ENCODE measurements at regions of chrX and their contacts with region 1.

Region 1: GRCh38 chrX:46376246-46376885 is 168.9 kb downstream of the ZNF674 start:
- DNase-seq: peak; percentile 59 to 85
- ATAC-seq: peak; percentile 95 to 96
- H3K4me3 ChIP-seq: no peak overlapping the region
- H3K27ac ChIP-seq: peak overlapping the region; percentile 75 to 95
- H3K4me1 ChIP-seq: peaks cover 36% of the 10 kb centered on the region
- CTCF ChIP-seq: peak; percentile 73
- EP300 ChIP-seq: no peak
- POLR2A ChIP-seq: no peak
- RAD21 ChIP-seq: peak; percentile 90 to 95

Region 2: DNA sequence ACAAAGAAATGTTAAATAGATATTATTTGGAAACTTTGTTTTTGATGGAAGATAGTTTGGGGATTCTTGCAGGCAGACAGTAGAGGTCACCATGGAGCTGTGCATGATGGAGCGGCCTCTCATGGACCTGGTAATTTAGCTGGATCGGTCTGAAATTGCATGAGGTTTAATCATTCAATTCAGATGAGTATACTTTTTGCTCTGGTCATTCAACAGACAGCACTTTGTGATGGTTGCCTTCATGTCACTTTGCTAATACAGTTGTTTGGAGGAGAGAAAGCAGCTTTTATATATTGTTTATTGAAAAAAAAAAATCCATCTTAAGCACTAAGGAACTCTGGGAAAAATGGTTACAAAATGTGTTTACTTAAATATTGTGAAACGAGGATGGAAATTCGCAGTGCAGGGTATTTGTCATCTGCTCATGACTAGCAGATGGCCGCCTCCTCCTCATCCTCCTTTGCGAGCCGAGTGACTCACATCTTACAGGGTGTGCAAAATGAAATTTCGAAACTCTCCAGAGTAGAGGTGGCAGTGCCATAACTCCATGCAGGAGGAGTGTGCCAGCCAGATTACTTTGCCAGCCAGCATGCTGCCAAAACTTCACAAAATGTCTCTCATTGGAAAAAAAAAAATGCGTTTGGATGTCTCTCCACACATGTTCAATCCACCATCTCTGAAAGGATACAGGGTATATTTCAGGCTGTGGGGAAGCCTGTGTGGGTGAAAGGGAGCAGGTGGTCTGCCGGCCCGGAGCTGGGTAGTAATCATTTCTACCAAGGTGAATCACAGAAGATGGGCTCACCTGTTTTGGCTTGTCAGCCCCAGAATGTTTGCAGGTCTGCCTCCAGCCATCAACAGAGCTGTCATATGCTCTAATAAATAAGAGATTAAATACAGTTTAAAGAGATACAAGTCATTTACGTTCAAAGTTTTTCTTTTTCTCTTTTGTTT is 860.8 kb before region 1 on chrX:
- CTCF ChIA-PET with region 1: interaction called, 19 read pairs
- POLR2A ChIA-PET with region 1: no interaction called
- DNase-seq: peak; percentile 56 to 95
- ATAC-seq: peak; percentile 95 to 99
- H3K4me3 ChIP-seq: peak overlapping the region; percentile 18; the same call in 1 of the 3 replicates
- H3K27ac ChIP-seq: peak overlapping the region; percentile 79 to 96
- H3K4me1 ChIP-seq: peaks cover 40% of the 10 kb centered on the region
- CTCF ChIP-seq: peak; percentile 79
- EP300 ChIP-seq: peak; percentile 91; a peak in 3 of 5 replicates
- POLR2A ChIP-seq: no peak
- RAD21 ChIP-seq: peak; percentile 90 to 91

Region 3: GRCh38 chrX:45824471-45824870 is 551.9 kb before region 1 on chrX:
- CTCF ChIA-PET with region 1: interaction called, 37 read pairs
- POLR2A ChIA-PET with region 1: interaction called, 6 read pairs
- DNase-seq: peak; percentile 73 to 91
- ATAC-seq: peak; percentile 98 to 99
- H3K4me3 ChIP-seq: no peak overlapping the region
- H3K27ac ChIP-seq: peak overlapping the region; percentile 64 to 66
- H3K4me1 ChIP-seq: peaks cover 62% of the 10 kb centered on the region
- CTCF ChIP-seq: peak; percentile 75
- EP300 ChIP-seq: no peak
- POLR2A ChIP-seq: no peak
- RAD21 ChIP-seq: peak; percentile 82 to 85

Region 4: DNA sequence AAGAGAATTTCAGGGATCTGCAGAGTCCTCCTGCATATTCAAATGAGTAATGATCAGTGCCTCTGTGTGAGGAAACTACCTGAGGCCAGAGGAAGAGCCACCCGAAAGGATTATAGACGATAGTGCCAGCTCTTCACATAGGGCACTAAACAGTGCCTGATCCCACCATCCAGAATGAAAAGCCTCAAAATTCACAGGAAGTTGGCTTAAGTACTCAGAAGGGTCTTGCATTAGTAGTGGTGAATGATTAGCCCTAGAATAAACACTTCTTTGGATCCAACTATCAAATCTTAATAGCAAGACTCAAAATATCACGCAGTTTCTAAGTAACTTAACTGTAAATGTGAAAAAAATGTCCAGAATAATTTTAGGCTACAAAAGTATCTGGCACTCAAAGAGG is 155.5 kb before region 1 on chrX:
- CTCF ChIA-PET with region 1: no interaction called
- POLR2A ChIA-PET with region 1: no interaction called
- DNase-seq: peak in 1 of 2 experiments; percentile 6
- ATAC-seq: peak in 1 of 2 experiments; percentile 27; a peak in 1 of 6 replicates
- H3K4me3 ChIP-seq: 0 out of 3 replicates have a peak overlapping the region, but pooled peaks have one; percentile 0
- H3K27ac ChIP-seq: peak overlapping the region; percentile 71 to 75
- H3K4me1 ChIP-seq: peaks cover 16% of the 10 kb centered on the region
- CTCF ChIP-seq: no peak
- EP300 ChIP-seq: no peak
- POLR2A ChIP-seq: no peak
- RAD21 ChIP-seq: no peak

Region 5: DNA sequence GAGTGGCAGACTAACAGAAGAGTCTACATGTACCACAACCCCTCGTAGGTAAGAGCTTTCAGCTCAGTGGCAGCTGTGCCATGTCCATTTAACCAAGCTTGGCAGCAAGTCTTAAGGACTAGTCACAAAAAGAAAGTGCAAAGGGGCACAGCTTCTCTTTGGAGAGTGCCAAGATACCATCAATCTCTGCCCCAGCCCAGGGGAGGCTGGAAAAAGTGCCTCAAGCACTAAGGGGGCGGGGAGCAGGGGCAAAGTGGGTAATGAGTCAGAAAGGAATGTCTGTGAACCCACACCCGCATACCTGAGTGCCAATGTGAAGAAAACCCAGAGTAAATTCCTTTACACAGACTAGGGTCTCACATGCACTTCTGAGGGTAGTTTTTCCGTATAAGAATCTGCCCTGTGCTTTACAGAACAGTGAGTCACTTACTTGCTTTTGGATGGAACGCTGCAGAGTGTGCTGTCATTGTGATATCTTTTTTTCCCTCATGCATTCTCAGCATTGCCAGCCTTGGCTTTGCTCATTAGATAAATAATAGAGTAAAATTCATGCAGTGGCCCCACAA is 51.0 kb before region 1 on chrX:
- CTCF ChIA-PET with region 1: interaction called, 18 read pairs
- POLR2A ChIA-PET with region 1: interaction called, 27 read pairs
- DNase-seq: peak; percentile 80 to 96
- ATAC-seq: peak; percentile 78 to 88
- H3K4me3 ChIP-seq: peak overlapping the region; percentile 54; the same call in 2 of the 3 replicates
- H3K27ac ChIP-seq: peak overlapping the region; percentile 93 to 99
- H3K4me1 ChIP-seq: peaks cover 70% of the 10 kb centered on the region
- CTCF ChIP-seq: no peak
- EP300 ChIP-seq: peak; percentile 92 to 97
- POLR2A ChIP-seq: no peak
- RAD21 ChIP-seq: peak; percentile 42 to 68

Region 6: DNA sequence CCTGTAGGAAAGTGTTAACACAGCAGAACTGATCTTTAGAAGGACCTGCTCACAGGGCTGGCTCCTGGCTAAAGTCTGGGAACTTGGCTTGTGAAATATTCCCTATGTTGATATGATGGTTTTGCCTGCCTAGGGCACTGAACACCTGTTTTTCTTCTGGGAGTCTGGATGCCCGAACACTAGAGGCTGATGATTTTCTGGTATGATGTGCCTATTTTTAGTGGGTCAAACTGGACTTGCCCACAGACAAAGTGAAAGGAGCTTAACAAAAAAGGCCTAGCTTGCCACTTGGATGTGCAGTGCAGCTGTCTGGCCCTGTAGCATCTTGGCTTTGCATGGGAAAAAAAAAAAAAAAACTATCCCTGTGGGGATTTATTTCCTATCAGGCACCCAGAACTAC is 129.7 kb after region 1 on chrX:
- CTCF ChIA-PET with region 1: no interaction called
- POLR2A ChIA-PET with region 1: no interaction called
- DNase-seq: no peak
- ATAC-seq: no peak
- H3K4me3 ChIP-seq: no peak overlapping the region
- H3K27ac ChIP-seq: no peak overlapping the region
- H3K4me1 ChIP-seq: no peaks in the 10 kb centered on the region
- CTCF ChIP-seq: no peak
- EP300 ChIP-seq: no peak
- POLR2A ChIP-seq: no peak
- RAD21 ChIP-seq: no peak

Region 7: GRCh38 chrX:47215391-47215811 is 839.0 kb after region 1 on chrX:
- CTCF ChIA-PET with region 1: no interaction called
- POLR2A ChIA-PET with region 1: no interaction called
- DNase-seq: no peak
- ATAC-seq: no peak
- H3K4me3 ChIP-seq: no peak overlapping the region
- H3K27ac ChIP-seq: no peak overlapping the region
- H3K4me1 ChIP-seq: peaks cover 18% of the 10 kb centered on the region
- CTCF ChIP-seq: no peak
- EP300 ChIP-seq: no peak
- POLR2A ChIP-seq: no peak
- RAD21 ChIP-seq: no peak

Measured in A549 (cell line).